ENCODE measurements at regions of chr6 and their contacts with region 1.

Region 1: GRCh38 chr6:152338335-152339125 is 298.6 kb downstream of the SYNE1 start:
- DNase-seq: peak in 1 of 2 experiments; percentile 75
- H3K4me3 ChIP-seq: no peak overlapping the region
- H3K27ac ChIP-seq: no peak overlapping the region
- H3K4me1 ChIP-seq: no peaks in the 10 kb centered on the region
- H3K27me3 ChIP-seq: no peaks in the 10 kb centered on the region
- CTCF ChIP-seq: peak; percentile 65 to 86 (median 83)
- EP300 ChIP-seq: no peak
- POLR2A ChIP-seq: no peak
- RAD21 ChIP-seq: peak; percentile 56 to 60

Region 2: DNA sequence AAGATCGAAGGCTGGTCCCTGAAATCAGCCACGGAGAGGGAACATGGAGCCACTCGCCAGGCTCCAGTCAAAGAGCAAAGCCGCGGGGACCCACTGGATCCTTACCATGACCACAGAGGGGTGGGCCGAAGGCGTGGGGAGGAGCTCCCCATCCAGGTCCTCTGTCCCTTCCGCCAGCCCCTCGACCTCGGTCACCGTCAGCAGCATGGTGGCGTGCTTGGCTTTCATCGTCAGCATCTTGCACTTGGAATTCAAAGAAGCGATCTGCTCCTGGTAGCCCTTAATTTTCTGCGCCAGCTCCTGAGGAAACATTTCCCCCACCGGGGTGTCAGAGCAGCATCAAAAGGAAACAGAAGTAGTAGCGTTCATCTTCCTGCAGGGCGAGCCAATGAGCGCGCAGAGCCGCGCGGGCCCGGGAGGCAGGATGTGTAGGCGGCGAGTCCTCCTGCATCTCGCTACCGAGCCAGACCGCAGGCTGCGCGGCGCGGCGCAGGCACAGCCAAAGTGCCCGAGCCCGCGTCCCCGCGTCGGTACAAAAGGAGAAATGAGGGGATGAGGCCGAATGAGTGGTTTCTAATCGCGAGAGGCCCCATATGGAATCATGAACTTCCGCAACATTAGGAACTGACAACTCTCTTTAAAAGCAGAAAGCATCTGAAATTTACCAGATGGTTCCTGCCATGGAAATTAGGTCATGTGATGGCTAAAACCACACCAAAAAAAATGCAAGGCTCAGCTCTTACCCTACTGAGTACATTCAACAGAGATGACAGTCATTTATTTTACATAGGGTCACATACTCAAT is 36.6 kb before region 1 on chr6:
- CTCF ChIA-PET with region 1: interaction called, 22 read pairs
- POLR2A ChIA-PET with region 1: no interaction called
- DNase-seq: peak; percentile 65 to 88
- H3K4me3 ChIP-seq: peak overlapping the region; percentile 71 to 80 (median 76)
- H3K27ac ChIP-seq: no peak overlapping the region
- H3K4me1 ChIP-seq: peaks cover 0 to 5% (median 1%) of the 10 kb centered on the region in 4 experiments; a peak in 1 of 7 replicates
- H3K27me3 ChIP-seq: no peaks in the 10 kb centered on the region
- CTCF ChIP-seq: peak; percentile 54 to 65 (median 64)
- EP300 ChIP-seq: no peak
- POLR2A ChIP-seq: peak in 1 of 2 experiments; percentile 68; a peak in 1 of 3 replicates
- RAD21 ChIP-seq: peak; percentile 46 to 52

Region 3: GRCh38 chr6:152316024-152316423 is 22.5 kb before region 1 on chr6:
- CTCF ChIA-PET with region 1: interaction called, 19 read pairs
- POLR2A ChIA-PET with region 1: no interaction called
- DNase-seq: no peak
- H3K4me3 ChIP-seq: no peak overlapping the region
- H3K27ac ChIP-seq: no peak overlapping the region
- H3K4me1 ChIP-seq: no peaks in the 10 kb centered on the region
- H3K27me3 ChIP-seq: no peaks in the 10 kb centered on the region
- CTCF ChIP-seq: no peak
- EP300 ChIP-seq: no peak
- POLR2A ChIP-seq: no peak
- RAD21 ChIP-seq: no peak

Region 4: DNA sequence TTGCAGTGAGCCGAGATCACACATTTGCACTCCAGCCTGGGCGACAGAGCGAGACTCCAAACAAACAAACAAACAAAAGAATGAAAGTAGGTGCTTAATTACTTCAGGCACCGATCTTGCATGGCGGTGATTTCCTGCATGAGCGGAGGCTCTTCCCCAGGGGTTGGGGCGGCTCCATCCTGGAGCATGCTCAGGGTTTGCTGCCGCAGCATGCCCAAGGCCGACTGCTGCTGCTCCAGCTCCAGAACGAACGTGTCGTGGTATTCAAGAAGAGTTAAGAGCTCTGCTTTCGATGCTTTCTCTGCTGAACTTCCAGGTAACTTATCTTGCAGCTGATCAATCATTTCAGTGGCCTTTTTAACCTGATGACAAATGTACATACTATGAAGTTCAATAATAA is 15.2 kb before region 1 on chr6:
- CTCF ChIA-PET with region 1: interaction called, 46 read pairs
- POLR2A ChIA-PET with region 1: no interaction called
- DNase-seq: no peak
- H3K4me3 ChIP-seq: no peak overlapping the region
- H3K27ac ChIP-seq: no peak overlapping the region
- H3K4me1 ChIP-seq: no peaks in the 10 kb centered on the region
- H3K27me3 ChIP-seq: no peaks in the 10 kb centered on the region
- CTCF ChIP-seq: no peak
- EP300 ChIP-seq: no peak
- POLR2A ChIP-seq: no peak
- RAD21 ChIP-seq: no peak

Region 5: DNA sequence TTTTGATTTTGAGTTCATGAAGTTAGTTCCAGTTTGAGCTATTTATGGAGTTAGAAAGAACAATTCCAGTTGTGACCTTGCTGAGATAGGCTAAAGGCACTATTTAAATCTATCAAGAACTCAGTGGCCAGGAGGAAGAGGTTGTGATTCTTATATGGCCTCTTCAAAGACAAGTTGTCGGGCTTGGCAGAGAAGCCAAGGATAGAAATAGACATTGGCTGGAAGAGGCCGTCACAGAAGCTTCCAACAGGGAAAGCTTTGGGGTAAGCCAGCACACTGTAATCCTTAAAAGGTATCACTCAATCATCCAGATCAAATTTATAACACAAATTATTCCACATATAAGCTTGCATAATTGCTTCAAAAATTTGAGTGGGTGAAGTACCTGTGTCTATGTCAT is 12.6 kb after region 1 on chr6:
- CTCF ChIA-PET with region 1: interaction called, 26 read pairs
- POLR2A ChIA-PET with region 1: no interaction called
- DNase-seq: no peak
- H3K4me3 ChIP-seq: no peak overlapping the region
- H3K27ac ChIP-seq: no peak overlapping the region
- H3K4me1 ChIP-seq: no peaks in the 10 kb centered on the region
- H3K27me3 ChIP-seq: no peaks in the 10 kb centered on the region
- CTCF ChIP-seq: no peak
- EP300 ChIP-seq: no peak
- POLR2A ChIP-seq: no peak
- RAD21 ChIP-seq: no peak

Region 6: DNA sequence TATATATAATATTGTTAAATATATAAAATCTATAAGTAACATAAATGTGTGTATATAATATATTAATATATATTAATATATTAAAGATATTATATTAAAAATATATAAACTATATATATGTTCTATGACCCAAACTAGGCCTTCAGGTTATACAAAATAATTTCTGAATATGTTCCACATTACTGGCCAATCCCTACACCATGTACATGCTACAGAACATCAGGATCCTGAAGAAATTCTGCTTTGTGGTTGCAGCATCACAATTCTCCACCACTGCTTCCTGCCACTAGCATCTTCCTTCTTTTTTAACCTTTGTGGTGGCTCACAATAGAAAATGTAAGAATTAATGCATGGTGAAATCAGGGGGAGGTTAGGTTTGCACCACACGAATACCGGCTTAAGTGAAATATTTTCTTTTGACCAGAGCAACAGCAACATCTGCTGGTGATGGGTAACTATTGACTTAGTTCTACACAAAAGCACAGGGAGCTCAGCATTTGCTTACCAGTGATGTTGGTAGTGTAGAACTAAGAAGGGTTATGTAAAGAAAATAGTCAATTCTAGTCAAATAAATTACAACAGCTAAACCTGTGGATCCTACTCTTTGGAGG is 18.0 kb after region 1 on chr6:
- CTCF ChIA-PET with region 1: interaction called, 31 read pairs
- POLR2A ChIA-PET with region 1: no interaction called
- DNase-seq: no peak
- H3K4me3 ChIP-seq: no peak overlapping the region
- H3K27ac ChIP-seq: no peak overlapping the region
- H3K4me1 ChIP-seq: no peaks in the 10 kb centered on the region
- H3K27me3 ChIP-seq: no peaks in the 10 kb centered on the region
- CTCF ChIP-seq: peak in 2 of 3 experiments; percentile 37 to 53; a peak in 2 of 4 replicates
- EP300 ChIP-seq: no peak
- POLR2A ChIP-seq: no peak
- RAD21 ChIP-seq: peak; percentile 77 to 78

Region 7: DNA sequence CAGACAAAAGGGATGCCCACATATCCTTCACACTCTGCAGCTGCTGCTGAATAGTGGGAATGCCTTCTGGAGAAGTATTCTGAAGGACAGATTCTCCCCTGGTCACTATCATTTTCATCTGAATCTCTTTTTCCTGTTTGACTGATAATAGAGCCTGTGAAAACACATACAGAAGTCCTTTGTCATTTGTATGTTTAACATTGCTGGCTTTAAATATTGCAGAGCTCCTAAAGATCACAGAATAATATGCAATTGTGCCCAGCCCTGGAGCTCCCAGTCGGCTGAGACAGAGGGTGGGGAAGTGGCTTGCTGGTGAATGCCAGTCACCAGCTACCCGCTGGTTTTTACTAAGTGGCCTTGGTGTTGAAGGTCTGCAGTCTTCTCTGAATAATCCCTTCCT is 26.3 kb after region 1 on chr6:
- CTCF ChIA-PET with region 1: interaction called, 31 read pairs
- POLR2A ChIA-PET with region 1: no interaction called
- DNase-seq: no peak
- H3K4me3 ChIP-seq: no peak overlapping the region
- H3K27ac ChIP-seq: no peak overlapping the region
- H3K4me1 ChIP-seq: no peaks in the 10 kb centered on the region; a peak in 1 of 7 replicates
- H3K27me3 ChIP-seq: no peaks in the 10 kb centered on the region
- CTCF ChIP-seq: no peak
- EP300 ChIP-seq: no peak
- POLR2A ChIP-seq: no peak
- RAD21 ChIP-seq: no peak

Region 8: GRCh38 chr6:152503546-152503945 is 165.0 kb after region 1 on chr6:
- CTCF ChIA-PET with region 1: no interaction called
- POLR2A ChIA-PET with region 1: no interaction called
- DNase-seq: no peak
- H3K4me3 ChIP-seq: no peak overlapping the region
- H3K27ac ChIP-seq: no peak overlapping the region
- H3K4me1 ChIP-seq: no peaks in the 10 kb centered on the region
- H3K27me3 ChIP-seq: no peaks in the 10 kb centered on the region
- CTCF ChIP-seq: no peak
- EP300 ChIP-seq: no peak
- POLR2A ChIP-seq: no peak
- RAD21 ChIP-seq: no peak

Region 9: GRCh38 chr6:152529369-152529768 is 190.8 kb after region 1 on chr6:
- CTCF ChIA-PET with region 1: no interaction called
- POLR2A ChIA-PET with region 1: no interaction called
- DNase-seq: no peak
- H3K4me3 ChIP-seq: no peak overlapping the region
- H3K27ac ChIP-seq: no peak overlapping the region
- H3K4me1 ChIP-seq: no peaks in the 10 kb centered on the region
- H3K27me3 ChIP-seq: no peaks in the 10 kb centered on the region
- CTCF ChIP-seq: no peak
- EP300 ChIP-seq: no peak
- POLR2A ChIP-seq: no peak
- RAD21 ChIP-seq: no peak

Measured in H1 (cell line).